Panc1 (cell line): ENCODE measurements at regions of chr14 and their contacts with region 1.

Region 1: GRCh38 chr14:60002819-60003492 is 83.0 kb downstream of the LRRC9 start:
- DNase-seq: no peak
- ATAC-seq: no peak
- H3K4me3 ChIP-seq: no peak overlapping the region
- H3K27ac ChIP-seq: no peak overlapping the region
- H3K4me1 ChIP-seq: no peaks in the 10 kb centered on the region
- H3K27me3 ChIP-seq: no peaks in the 10 kb centered on the region
- CTCF ChIP-seq: no peak

Region 2: GRCh38 chr14:60248697-60249318 is 245.9 kb after region 1 on chr14 and contains the start of gene PPM1A:
- CTCF ChIA-PET with region 1: no interaction called
- POLR2A ChIA-PET with region 1: interaction called, 11 read pairs
- in situ Hi-C with region 1: no loop called
- intact Hi-C with region 1: no loop called
- DNase-seq: peak; percentile 43
- ATAC-seq: peak; percentile 91
- H3K4me3 ChIP-seq: peak within 1 kb of the TSS; percentile 76 to 79
- H3K27ac ChIP-seq: peak within 1 kb of the TSS; percentile 89
- H3K4me1 ChIP-seq: peaks cover 18% of the 10 kb centered on the region; the same call in 1 of the 2 replicates
- H3K27me3 ChIP-seq: no peaks in the 10 kb centered on the region
- CTCF ChIP-seq: no peak
- total RNA-seq, gene PPM1A: 28.1 TPM